ENCODE measurements at regions of chr1 and their contacts with region 1.

Region 1: DNA sequence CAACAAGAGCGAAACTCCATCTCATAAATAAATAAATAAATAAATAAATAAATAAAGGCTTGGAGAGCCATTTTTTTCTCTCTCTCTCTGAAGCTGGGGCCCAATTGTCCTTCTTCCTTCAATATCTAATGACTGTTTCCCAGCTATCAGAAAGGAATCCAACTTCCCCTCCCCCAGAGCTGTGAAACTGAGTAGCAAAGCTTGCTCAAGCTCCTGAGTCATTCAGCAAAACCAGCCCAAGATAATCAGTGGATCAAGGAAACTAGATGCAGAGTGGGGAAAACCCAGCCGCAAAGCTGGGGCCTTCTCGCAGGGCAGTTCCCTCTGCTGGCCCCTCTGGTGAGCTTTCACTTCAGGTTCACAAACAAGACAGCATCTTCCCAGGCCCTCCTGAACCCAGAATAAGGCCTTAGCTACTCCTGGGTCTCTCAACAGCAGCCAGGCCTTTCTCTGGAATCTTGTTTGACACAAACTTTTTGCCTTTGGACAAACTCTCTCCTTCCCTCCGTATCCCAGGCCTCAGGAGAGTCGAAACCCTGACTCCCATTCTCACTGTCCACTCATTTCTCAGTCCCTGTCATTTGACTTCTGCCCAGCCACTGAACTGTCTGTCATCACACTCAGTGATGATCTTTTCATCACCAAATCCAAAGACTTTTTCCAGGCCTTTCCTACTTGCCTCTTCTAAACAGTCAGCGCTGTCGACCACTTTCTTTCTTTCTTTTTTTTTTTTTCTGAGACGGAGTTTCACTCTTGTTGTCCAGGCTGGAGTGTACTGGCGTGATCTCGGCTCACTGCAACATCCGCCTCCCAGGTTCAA is 18.0 kb upstream of the PTP4A2 start:
- DNase-seq: peak; percentile 42 to 93 (median 72)
- ATAC-seq: peak; percentile 80
- H3K4me3 ChIP-seq: no peak overlapping the region
- H3K4me3 Mint-ChIP-seq: peak overlapping the region; percentile 42
- H3K27ac ChIP-seq: peak overlapping the region in 1 of 2 experiments; percentile 58
- H3K27ac Mint-ChIP-seq: peak overlapping the region; percentile 58
- H3K4me1 ChIP-seq: peaks cover 22% of the 10 kb centered on the region
- H3K4me1 Mint-ChIP-seq: peaks cover 43% of the 10 kb centered on the region
- H3K27me3 ChIP-seq: no peaks in the 10 kb centered on the region
- H3K27me3 Mint-ChIP-seq: no peaks in the 10 kb centered on the region
- CTCF ChIP-seq: no peak

Region 2: GRCh38 chr1:31605908-31606427 is 350.2 kb before region 1 on chr1:
- CTCF ChIA-PET with region 1: no interaction called
- POLR2A ChIA-PET with region 1: no interaction called
- intact Hi-C with region 1: no loop called
- DNase-seq: peak in 1 of 9 experiments; percentile 33
- ATAC-seq: no peak
- H3K4me3 ChIP-seq: no peak overlapping the region
- H3K4me3 Mint-ChIP-seq: no peak overlapping the region
- H3K27ac ChIP-seq: no peak overlapping the region
- H3K27ac Mint-ChIP-seq: no peak overlapping the region
- H3K4me1 ChIP-seq: no peaks in the 10 kb centered on the region
- H3K4me1 Mint-ChIP-seq: no peaks in the 10 kb centered on the region
- H3K27me3 ChIP-seq: no peaks in the 10 kb centered on the region
- H3K27me3 Mint-ChIP-seq: peaks cover 10% of the 10 kb centered on the region
- CTCF ChIP-seq: no peak

Region 3: GRCh38 chr1:31815752-31816500 is 140.2 kb before region 1 on chr1 and contains the start of gene SPOCD1:
- CTCF ChIA-PET with region 1: interaction called, 77 read pairs
- POLR2A ChIA-PET with region 1: no interaction called
- intact Hi-C with region 1: no loop called
- DNase-seq: peak; percentile 66 to 91 (median 83)
- ATAC-seq: peak; percentile 97
- H3K4me3 ChIP-seq: no peak within 1 kb of the TSS
- H3K4me3 Mint-ChIP-seq: no peak within 1 kb of the TSS
- H3K27ac ChIP-seq: peak within 1 kb of the TSS in 1 of 2 experiments; percentile 12
- H3K27ac Mint-ChIP-seq: no peak within 1 kb of the TSS
- H3K4me1 ChIP-seq: no peaks in the 10 kb centered on the region
- H3K4me1 Mint-ChIP-seq: peaks cover 17% of the 10 kb centered on the region
- H3K27me3 ChIP-seq: no peaks in the 10 kb centered on the region
- H3K27me3 Mint-ChIP-seq: no peaks in the 10 kb centered on the region
- CTCF ChIP-seq: peak; percentile 72
- total RNA-seq, gene SPOCD1: not detected

Region 4: DNA sequence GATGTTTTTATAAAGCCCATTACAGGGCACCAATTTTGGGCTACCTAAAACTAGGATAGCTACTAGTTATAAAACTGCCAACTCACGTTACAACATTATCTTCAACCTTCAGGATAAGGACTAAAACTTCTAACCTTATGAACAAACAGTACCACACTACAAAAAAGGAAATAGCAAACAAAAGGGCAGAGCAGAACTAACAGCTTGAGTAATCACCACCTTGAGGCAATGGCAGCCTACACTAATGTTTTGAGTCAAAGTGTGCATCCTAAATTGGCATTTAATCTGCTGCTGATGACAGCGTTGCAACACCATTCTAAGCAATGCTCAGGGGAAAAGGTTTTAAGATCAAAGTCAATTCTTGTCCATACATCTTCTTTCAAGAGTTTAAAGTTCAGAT is 45.2 kb before region 1 on chr1:
- CTCF ChIA-PET with region 1: interaction called, 4 read pairs
- POLR2A ChIA-PET with region 1: interaction called, 3 read pairs
- intact Hi-C with region 1: loop called in 1 of 2 experiments (anchors 5 kb)
- DNase-seq: no peak
- ATAC-seq: peak; percentile 38
- H3K4me3 ChIP-seq: no peak overlapping the region
- H3K4me3 Mint-ChIP-seq: peak overlapping the region; percentile 2
- H3K27ac ChIP-seq: peak overlapping the region in 1 of 2 experiments; percentile 0
- H3K27ac Mint-ChIP-seq: peak overlapping the region; percentile 64
- H3K4me1 ChIP-seq: peaks cover 23% of the 10 kb centered on the region
- H3K4me1 Mint-ChIP-seq: peaks cover 50% of the 10 kb centered on the region
- H3K27me3 ChIP-seq: no peaks in the 10 kb centered on the region
- H3K27me3 Mint-ChIP-seq: no peaks in the 10 kb centered on the region
- CTCF ChIP-seq: no peak

Region 5: GRCh38 chr1:31923901-31924535 is 32.1 kb before region 1 on chr1:
- CTCF ChIA-PET with region 1: interaction called, 4 read pairs
- POLR2A ChIA-PET with region 1: interaction called, 3 read pairs
- intact Hi-C with region 1: loop called in 1 of 2 experiments (anchors 5 kb)
- DNase-seq: peak in 2 of 9 experiments; percentile 39 to 70
- ATAC-seq: peak; percentile 50
- H3K4me3 ChIP-seq: no peak overlapping the region
- H3K4me3 Mint-ChIP-seq: peak overlapping the region; percentile 69
- H3K27ac ChIP-seq: peak overlapping the region in 1 of 2 experiments; percentile 85
- H3K27ac Mint-ChIP-seq: peak overlapping the region; percentile 92
- H3K4me1 ChIP-seq: peaks cover 74% of the 10 kb centered on the region
- H3K4me1 Mint-ChIP-seq: peaks cover 81% of the 10 kb centered on the region
- H3K27me3 ChIP-seq: no peaks in the 10 kb centered on the region
- H3K27me3 Mint-ChIP-seq: no peaks in the 10 kb centered on the region
- CTCF ChIP-seq: no peak

Measured in CD8-positive, alpha-beta T cell (primary cell).